BJ (cell line): ENCODE measurements at regions of chr20 and their contacts with region 1.

Region 1: GRCh38 chr20:31605031-31605901 is at the start of gene ID1:
- DNase-seq: peak; percentile 70
- H3K4me3 ChIP-seq: peak within 1 kb of the TSS; percentile 76
- H3K27me3 ChIP-seq: no peaks in the 10 kb centered on the region
- CTCF ChIP-seq: no peak
- polyA plus RNA-seq, gene ID1: 126 and 135 TPM in 2 replicates

Region 2: DNA sequence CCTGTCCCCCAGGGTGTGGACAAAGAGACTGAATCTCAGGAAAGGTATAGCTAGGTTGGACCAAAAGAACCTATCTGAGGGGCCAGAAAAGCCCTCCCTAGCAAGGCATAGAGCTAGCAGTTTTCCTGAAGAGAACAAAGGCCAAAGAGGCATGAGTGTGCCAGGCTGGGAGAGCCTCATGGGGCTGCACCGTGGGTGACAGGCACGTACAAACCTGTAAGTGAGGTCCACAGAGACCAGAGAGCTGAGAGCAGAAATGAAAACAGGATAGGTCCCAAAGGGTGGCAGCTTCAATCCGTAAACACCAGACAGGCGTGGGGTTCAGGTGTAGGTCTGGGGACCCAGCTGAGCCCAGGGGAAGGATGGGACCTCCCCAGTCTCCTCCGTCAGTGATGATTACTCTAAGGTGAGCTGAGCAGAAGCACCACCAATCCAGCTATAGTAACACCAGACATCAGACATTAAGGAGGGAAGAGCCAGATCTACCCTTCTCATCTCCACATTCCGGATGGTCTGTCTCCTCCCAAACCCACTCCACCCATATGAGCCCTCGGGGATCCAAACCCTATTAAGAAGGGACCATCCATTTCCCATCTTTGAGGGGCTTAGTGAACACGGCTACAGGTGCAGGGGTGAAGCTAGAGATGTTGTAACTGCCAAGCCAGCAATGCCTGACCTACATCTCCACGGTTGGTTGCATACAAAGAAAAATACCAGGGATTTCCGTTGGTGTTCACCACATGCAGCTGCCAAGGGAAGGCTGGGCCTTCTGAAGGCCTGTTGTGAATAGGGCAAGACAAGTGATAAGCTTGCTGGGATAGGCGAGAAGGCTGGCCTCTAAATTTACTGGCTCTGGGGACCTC is 79.1 kb after region 1 on chr20:
- CTCF ChIA-PET with region 1: no interaction called
- POLR2A ChIA-PET with region 1: interaction called, 12 read pairs
- DNase-seq: no peak
- H3K4me3 ChIP-seq: no peak overlapping the region
- H3K27me3 ChIP-seq: no peaks in the 10 kb centered on the region
- CTCF ChIP-seq: no peak